CD8-positive, alpha-beta T cell (primary cell): ENCODE measurements at regions of chrX and their contacts with region 1.

Region 1: DNA sequence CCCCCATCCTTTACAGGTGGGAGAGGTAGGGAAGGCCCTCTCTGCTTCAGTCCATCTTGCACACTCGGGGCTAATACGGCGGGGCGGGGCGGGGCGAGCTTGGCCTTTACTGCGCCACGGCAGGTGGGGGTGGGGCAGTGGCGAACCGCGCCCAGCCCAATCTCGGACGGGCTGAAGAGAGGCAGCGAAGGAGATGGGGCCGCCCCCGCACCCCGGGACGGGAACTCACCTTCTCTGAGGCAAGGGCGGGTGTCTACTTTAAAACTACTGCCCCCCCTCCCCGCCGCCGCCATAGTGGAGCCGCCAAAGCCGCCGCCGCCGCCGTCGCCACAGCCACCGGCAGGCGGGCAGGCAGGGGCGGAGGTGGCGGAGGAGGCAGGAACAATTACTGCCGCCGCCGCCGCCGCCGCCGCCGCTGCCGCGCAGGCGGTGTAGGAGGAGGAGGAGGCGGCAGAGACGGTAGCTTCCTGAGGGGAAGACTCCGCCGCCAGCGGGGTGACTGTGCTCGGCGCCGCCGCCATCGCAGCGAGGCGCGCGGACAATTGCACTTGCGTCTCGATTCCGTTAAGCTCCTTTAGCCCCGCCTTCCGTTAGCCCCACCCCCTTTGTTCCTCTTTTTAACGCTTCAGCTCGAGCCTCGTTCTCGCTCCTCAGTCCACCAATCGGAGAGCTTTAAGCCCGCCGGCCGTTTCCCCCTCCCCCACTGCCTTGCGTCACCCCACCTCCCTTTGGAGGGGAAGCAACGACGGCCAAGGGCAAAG is at the start of gene ZMAT1:
- DNase-seq: peak; percentile 83 to 95 (median 93)
- ATAC-seq: peak; percentile 82
- H3K4me3 ChIP-seq: peak within 1 kb of the TSS; percentile 48 to 60
- H3K4me3 Mint-ChIP-seq: peak within 1 kb of the TSS; percentile 88
- H3K27ac ChIP-seq: peak within 1 kb of the TSS; percentile 59 to 82
- H3K27ac Mint-ChIP-seq: peak within 1 kb of the TSS; percentile 96
- H3K4me1 ChIP-seq: peaks cover 7% of the 10 kb centered on the region
- H3K4me1 Mint-ChIP-seq: peaks cover 31% of the 10 kb centered on the region
- H3K27me3 ChIP-seq: no peaks in the 10 kb centered on the region
- H3K27me3 Mint-ChIP-seq: no peaks in the 10 kb centered on the region
- CTCF ChIP-seq: no peak
- total RNA-seq, gene ZMAT1: 15.2 to 15.7 TPM

Region 2: DNA sequence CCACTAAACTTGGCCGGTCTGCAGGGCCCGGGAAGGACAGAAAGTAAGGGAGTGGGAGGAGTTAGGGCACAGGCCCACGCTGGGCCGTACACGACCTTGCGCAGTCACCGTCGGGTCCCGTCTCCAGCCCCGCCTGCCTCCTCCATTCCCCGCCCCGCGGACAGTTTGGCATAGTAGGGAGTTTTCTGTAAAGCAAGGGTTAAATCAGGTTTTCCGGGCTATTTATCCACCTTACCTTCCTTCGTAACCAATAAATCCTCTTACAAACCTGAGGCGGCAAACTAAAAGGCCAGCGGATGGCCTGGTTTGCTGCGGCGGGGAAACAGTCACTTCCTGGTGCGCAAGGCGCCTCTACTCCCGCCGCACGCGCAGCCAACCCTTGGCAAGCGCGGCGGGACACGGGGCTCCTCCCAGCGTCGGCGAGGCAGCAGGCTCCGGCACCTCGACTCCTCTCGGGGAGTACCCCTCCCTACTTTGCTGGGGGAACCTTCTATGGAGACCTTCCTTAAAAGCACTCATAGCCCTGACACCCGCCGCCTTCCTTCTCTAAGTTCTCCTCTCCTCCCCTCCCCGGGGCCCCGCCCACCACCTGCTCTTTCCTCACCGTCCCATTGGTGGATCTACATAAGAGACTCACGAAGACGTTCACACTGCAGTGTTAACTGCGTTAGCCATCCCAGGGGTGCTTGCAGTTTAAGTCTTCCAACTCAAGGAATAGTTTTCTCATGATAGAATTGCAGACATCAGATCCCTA is 879.9 kb before region 1 on chrX and contains the start of gene TRMT2B:
- CTCF ChIA-PET with region 1: no interaction called
- POLR2A ChIA-PET with region 1: no interaction called
- intact Hi-C with region 1: loop called in 1 of 2 experiments (anchors 5 kb)
- DNase-seq: peak; percentile 56 to 88 (median 80)
- ATAC-seq: peak; percentile 85
- H3K4me3 ChIP-seq: peak within 1 kb of the TSS; percentile 51 to 70
- H3K4me3 Mint-ChIP-seq: peak within 1 kb of the TSS; percentile 91
- H3K27ac ChIP-seq: peak within 1 kb of the TSS; percentile 94 to 96
- H3K27ac Mint-ChIP-seq: peak within 1 kb of the TSS; percentile 98
- H3K4me1 ChIP-seq: peaks cover 11% of the 10 kb centered on the region
- H3K4me1 Mint-ChIP-seq: peaks cover 29% of the 10 kb centered on the region
- H3K27me3 ChIP-seq: no peaks in the 10 kb centered on the region
- H3K27me3 Mint-ChIP-seq: no peaks in the 10 kb centered on the region
- CTCF ChIP-seq: no peak
- total RNA-seq, gene TRMT2B: 27.8 to 28.0 TPM

Region 3: DNA sequence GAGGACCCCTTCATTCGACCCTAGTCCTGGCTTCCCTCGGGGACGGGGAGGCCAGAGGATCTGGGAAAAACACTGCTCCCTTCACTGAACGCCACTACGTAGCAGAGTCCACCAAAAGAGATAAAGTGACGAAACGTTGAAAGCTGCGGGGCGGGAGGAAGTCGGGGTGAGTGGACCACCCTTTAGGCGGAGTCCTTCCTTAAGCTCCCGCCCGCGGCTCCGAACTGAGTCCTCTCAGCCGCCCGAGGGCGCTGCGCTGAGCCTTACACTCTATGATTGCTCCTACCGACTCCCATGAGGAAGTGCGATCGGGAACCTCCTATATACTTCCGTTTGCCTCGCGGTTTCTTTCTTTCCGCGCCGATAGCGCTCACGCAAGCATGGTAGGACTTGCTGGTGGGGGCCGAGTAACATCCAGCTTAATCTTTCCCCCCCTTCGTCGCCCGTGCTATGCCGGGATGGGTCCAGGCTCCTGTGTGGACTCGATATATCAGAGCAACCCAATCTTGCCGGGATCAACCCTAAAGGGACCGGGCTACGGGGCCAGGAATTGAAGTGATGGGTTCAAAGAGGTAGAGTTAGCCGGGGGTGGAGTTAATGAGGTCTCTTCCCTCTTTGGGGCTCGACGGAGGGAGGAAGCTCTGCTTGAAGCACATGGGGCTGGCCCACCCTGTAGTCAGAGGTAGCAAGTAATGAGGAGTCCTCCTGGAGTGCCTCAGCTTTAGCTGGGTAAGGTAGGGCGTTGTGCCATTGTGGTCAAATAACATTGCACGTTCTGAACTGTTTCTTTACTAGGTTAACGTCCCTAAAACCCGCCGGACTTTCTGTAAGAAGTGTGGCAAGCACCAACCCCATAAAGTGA is 540.8 kb before region 1 on chrX and contains the start of gene RPL36A:
- CTCF ChIA-PET with region 1: no interaction called
- POLR2A ChIA-PET with region 1: interaction called, 3 read pairs
- intact Hi-C with region 1: loop called in 1 of 2 experiments (anchors 1 kb)
- DNase-seq: peak; percentile 50 to 91 (median 78)
- ATAC-seq: peak; percentile 92
- H3K4me3 ChIP-seq: peak within 1 kb of the TSS; percentile 49 to 69
- H3K4me3 Mint-ChIP-seq: peak within 1 kb of the TSS; percentile 91
- H3K27ac ChIP-seq: peak within 1 kb of the TSS; percentile 53 to 87
- H3K27ac Mint-ChIP-seq: peak within 1 kb of the TSS; percentile 95
- H3K4me1 ChIP-seq: peaks cover 15% of the 10 kb centered on the region
- H3K4me1 Mint-ChIP-seq: peaks cover 30% of the 10 kb centered on the region
- H3K27me3 ChIP-seq: no peaks in the 10 kb centered on the region
- H3K27me3 Mint-ChIP-seq: no peaks in the 10 kb centered on the region
- CTCF ChIP-seq: peak; percentile 54
- total RNA-seq, gene RPL36A: 308 to 378 TPM

Region 4: DNA sequence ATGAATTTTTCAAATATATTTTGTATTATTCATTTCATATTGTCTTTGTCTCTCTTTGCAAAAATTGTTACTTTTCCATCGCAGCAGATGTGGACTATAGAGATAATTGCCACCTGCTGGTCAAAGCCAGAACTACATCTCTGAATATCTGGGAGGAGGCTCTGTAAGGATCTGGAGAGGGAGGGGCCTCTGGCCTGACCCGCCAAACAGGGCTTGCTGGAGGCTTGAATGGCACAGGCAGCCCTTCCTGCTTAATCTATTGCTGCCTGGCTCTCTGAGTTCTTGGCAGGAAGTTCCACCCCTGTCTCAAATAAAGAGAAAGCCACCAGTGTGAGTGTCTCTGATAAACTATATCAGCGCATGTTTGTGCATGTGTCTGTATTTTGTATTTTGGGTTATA is 132.3 kb before region 1 on chrX:
- CTCF ChIA-PET with region 1: no interaction called
- POLR2A ChIA-PET with region 1: no interaction called
- intact Hi-C with region 1: loop called (anchors 5 kb)
- DNase-seq: peak; percentile 46 to 89 (median 79)
- ATAC-seq: peak; percentile 100
- H3K4me3 ChIP-seq: no peak overlapping the region
- H3K4me3 Mint-ChIP-seq: peak overlapping the region; percentile 58
- H3K27ac ChIP-seq: no peak overlapping the region
- H3K27ac Mint-ChIP-seq: no peak overlapping the region
- H3K4me1 ChIP-seq: peaks cover 4% of the 10 kb centered on the region
- H3K4me1 Mint-ChIP-seq: peaks cover 8% of the 10 kb centered on the region
- H3K27me3 ChIP-seq: no peaks in the 10 kb centered on the region
- H3K27me3 Mint-ChIP-seq: no peaks in the 10 kb centered on the region
- CTCF ChIP-seq: peak; percentile 73

Region 5: DNA sequence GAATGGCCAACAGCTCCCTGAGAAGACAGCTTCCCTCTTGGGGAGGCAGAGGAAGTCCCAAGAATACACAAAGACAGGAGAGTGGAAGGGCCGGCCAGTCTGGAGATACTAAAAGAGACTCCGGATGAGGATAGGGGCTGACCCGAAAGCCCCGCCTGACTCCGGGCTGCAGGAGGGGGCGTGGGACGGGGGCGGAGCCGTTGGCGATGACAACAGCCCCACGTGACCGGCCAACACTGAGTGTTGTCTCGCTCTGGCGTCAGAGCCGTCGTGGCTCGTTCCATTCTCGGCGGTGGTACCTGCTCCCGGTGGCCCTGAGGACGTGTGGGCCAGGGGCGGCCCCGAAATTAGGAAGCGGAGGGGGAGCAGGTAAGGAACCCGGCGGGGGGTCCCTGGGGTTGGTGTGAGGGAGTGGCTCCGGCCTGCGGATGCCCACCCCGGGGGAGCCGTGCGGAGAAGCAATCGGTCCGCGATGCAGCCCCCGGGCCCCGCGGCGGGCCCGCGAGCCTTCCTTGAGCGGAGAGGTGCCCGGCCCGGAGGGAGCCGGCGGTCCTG is 1283.3 kb after region 1 on chrX and contains the start of gene BEX4:
- CTCF ChIA-PET with region 1: no interaction called
- POLR2A ChIA-PET with region 1: no interaction called
- intact Hi-C with region 1: loop called in 1 of 2 experiments (anchors 5 kb)
- DNase-seq: peak; percentile 68 to 89 (median 80)
- ATAC-seq: peak; percentile 90
- H3K4me3 ChIP-seq: peak within 1 kb of the TSS; percentile 63 to 68
- H3K4me3 Mint-ChIP-seq: peak within 1 kb of the TSS; percentile 87
- H3K27ac ChIP-seq: peak within 1 kb of the TSS; percentile 84 to 96
- H3K27ac Mint-ChIP-seq: peak within 1 kb of the TSS; percentile 93
- H3K4me1 ChIP-seq: peaks cover 8% of the 10 kb centered on the region
- H3K4me1 Mint-ChIP-seq: peaks cover 16% of the 10 kb centered on the region
- H3K27me3 ChIP-seq: no peaks in the 10 kb centered on the region
- H3K27me3 Mint-ChIP-seq: no peaks in the 10 kb centered on the region
- CTCF ChIP-seq: no peak
- total RNA-seq, gene BEX4: 50.6 to 54.3 TPM